ENCODE measurements at regions of chr1 and their contacts with region 1.

Region 1: DNA sequence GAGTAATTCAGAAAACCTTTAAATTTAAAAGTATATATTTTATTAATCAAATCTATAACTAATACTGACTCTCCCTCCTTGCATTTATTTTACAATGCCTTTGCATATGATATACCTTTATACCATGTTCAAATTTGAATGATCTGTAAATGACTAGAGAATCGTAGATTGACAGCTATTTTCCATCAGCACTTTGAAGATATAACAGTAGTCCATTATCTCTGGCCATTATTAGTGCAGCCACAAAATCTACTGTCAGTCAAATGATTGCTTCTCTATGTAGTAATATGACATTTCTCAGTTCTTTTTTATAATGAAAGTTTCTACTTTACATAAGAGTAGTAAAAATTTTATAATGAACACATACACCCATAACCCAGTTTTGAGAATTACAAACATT is 1054.8 kb upstream of the B3GALT2 start:
- DNase-seq: no peak
- ATAC-seq: no peak

Region 2: DNA sequence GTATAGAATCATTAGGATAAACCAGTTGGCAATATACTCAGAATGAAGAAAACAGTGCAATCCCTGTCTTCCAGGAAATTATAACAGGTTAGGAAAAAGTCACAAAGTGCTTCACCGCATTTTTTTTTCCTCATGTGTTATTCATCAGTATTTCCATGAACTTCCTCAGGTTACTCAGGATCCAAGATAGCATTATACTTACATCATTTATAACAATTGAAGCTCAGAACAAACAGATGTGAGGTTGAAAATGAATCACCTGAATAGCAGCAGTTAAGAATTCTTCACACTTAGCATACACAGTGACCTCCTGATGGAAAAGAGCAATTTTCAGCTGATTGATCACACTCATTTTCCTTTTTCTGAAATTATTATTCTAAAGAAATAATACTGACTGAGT is 14.1 kb before region 1 on chr1:
- intact Hi-C with region 1: loop called (anchors 1 kb)
- DNase-seq: no peak
- ATAC-seq: no peak